ENCODE measurements at regions of chr7 and their contacts with region 1.

Region 1: DNA sequence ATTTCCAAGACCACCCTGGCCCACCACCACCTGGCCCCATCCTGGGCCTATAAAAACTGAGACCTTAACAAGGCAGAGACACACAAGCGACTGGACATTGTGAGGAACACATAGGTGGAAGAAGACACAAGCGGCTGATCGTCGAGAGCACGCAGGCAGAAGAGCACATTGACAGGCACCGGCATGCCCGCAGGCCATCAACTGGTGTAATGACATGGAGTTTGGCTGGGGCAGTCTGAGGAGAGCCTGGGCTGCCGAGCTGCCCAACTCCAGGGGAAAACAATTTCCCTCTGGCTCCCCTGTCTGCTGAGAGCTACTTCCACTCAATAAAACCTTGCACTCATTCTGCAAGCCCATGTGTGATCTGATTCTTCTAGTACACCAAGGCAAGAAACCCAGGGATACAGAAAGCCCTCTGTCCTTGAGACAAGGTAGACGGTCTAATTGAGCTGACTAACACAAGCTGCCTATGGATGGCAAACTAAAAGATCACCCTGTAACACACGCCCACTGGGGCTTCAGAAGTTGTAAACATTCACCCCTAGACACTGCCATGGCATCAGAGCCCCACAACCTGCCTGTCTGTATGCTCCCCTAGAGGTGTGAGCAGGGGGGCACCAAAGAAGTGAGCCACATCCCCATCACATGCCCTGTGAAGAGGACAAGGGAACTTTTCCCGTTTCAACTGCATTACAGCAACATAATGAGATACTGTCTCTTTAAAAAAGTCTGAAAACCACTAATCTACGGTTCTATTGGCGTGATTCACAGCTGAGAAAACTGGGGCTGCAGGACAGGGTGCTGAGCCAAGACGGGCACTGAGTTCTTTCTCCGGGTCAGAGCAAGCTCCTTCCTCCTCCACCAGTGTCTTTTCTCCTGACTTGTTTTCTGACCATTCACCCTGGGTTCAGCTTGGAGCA is 18.5 kb upstream of the TNS3 start:
- DNase-seq: peak; percentile 85
- H3K4me3 Mint-ChIP-seq: peak overlapping the region; percentile 63
- H3K27ac Mint-ChIP-seq: peak overlapping the region; percentile 98
- H3K4me1 Mint-ChIP-seq: peaks cover 64% of the 10 kb centered on the region
- H3K27me3 Mint-ChIP-seq: no peaks in the 10 kb centered on the region
- CTCF ChIP-seq: no peak

Region 2: GRCh38 chr7:47571331-47572093 is 28.9 kb before region 1 on chr7:
- CTCF ChIA-PET with region 1: interaction called, 3 read pairs
- POLR2A ChIA-PET with region 1: interaction called, 11 read pairs
- intact Hi-C with region 1: no loop called
- DNase-seq: peak; percentile 81
- H3K4me3 Mint-ChIP-seq: peak overlapping the region; percentile 55
- H3K27ac Mint-ChIP-seq: peak overlapping the region; percentile 85
- H3K4me1 Mint-ChIP-seq: peaks cover 52% of the 10 kb centered on the region
- H3K27me3 Mint-ChIP-seq: no peaks in the 10 kb centered on the region
- CTCF ChIP-seq: no peak

Region 3: DNA sequence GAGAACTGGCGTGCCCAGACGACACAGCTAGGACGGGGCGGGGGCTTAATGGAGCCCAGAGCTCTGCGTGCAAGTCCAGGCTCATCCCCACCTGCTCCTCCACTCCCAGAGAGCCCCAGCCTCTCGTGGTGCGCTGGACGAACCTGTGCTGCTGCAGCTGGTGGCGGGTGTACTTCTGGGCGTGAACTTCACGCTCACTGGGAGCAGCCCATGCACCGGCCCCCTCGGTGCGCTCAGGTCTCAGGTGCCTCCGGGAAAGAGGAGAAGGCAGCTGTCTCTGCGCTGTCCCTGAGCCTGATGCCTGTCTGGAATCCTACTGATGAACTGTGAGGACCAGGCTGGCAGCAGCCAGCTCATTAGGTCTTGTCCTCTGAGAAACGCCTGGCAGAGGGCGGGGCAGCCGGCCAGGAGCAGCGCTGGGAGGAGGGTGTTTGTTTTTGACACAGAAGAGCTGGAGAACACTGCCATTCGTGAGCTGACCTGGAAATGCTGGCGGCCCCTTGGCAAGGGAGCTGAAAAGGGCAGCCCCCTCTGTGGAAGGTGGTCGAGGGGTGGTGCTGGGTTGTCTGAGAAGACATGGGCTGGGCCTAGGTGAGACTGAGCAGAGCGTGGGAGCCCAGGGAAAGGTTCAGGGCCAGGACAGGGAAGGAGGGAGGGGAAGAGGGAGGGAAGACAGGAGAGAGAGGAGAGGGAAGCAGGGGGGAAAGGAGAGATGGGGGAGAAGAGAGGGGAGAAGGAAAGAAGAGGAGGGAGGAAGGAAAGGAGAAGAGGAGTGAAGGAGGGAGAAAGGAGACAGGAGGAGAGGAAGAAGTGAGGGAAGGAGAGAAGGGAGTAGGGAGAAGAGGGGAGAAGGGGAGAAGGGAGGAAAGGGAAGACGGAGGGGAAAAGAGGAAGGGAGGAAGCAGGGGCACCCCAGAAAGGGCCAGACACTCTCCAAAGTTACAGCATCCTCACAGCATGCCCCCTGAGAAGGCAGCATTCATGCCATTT is 34.9 kb after region 1 on chr7:
- CTCF ChIA-PET with region 1: no interaction called
- POLR2A ChIA-PET with region 1: interaction called, 14 read pairs
- intact Hi-C with region 1: no loop called
- DNase-seq: peak; percentile 69
- H3K4me3 Mint-ChIP-seq: peak overlapping the region; percentile 61
- H3K27ac Mint-ChIP-seq: peak overlapping the region; percentile 86
- H3K4me1 Mint-ChIP-seq: peaks cover 13% of the 10 kb centered on the region
- H3K27me3 Mint-ChIP-seq: no peaks in the 10 kb centered on the region
- CTCF ChIP-seq: no peak

Region 4: GRCh38 chr7:47669061-47669891 is 68.8 kb after region 1 on chr7:
- CTCF ChIA-PET with region 1: interaction called, 6 read pairs
- POLR2A ChIA-PET with region 1: interaction called, 25 read pairs
- intact Hi-C with region 1: loop called (anchors 2 kb)
- DNase-seq: peak; percentile 95
- H3K4me3 Mint-ChIP-seq: no peak overlapping the region
- H3K27ac Mint-ChIP-seq: peak overlapping the region; percentile 93
- H3K4me1 Mint-ChIP-seq: peaks cover 29% of the 10 kb centered on the region
- H3K27me3 Mint-ChIP-seq: no peaks in the 10 kb centered on the region
- CTCF ChIP-seq: no peak

Region 5: GRCh38 chr7:47757921-47758411 is 157.5 kb after region 1 on chr7:
- CTCF ChIA-PET with region 1: no interaction called
- POLR2A ChIA-PET with region 1: interaction called, 20 read pairs
- intact Hi-C with region 1: loop called (anchors 10 kb)
- DNase-seq: peak; percentile 82
- H3K4me3 Mint-ChIP-seq: peak overlapping the region; percentile 2
- H3K27ac Mint-ChIP-seq: peak overlapping the region; percentile 100
- H3K4me1 Mint-ChIP-seq: peaks cover 39% of the 10 kb centered on the region
- H3K27me3 Mint-ChIP-seq: no peaks in the 10 kb centered on the region
- CTCF ChIP-seq: no peak

Region 6: GRCh38 chr7:47968847-47969774 is 368.7 kb after region 1 on chr7:
- CTCF ChIA-PET with region 1: no interaction called
- POLR2A ChIA-PET with region 1: no interaction called
- intact Hi-C with region 1: no loop called
- DNase-seq: peak; percentile 60
- H3K4me3 Mint-ChIP-seq: no peak overlapping the region
- H3K27ac Mint-ChIP-seq: no peak overlapping the region
- H3K4me1 Mint-ChIP-seq: peaks cover 2% of the 10 kb centered on the region
- H3K27me3 Mint-ChIP-seq: no peaks in the 10 kb centered on the region
- CTCF ChIP-seq: peak; percentile 80